GM18951 (cell line): ENCODE measurements at regions of chr1 and their contacts with region 1.

Region 1: DNA sequence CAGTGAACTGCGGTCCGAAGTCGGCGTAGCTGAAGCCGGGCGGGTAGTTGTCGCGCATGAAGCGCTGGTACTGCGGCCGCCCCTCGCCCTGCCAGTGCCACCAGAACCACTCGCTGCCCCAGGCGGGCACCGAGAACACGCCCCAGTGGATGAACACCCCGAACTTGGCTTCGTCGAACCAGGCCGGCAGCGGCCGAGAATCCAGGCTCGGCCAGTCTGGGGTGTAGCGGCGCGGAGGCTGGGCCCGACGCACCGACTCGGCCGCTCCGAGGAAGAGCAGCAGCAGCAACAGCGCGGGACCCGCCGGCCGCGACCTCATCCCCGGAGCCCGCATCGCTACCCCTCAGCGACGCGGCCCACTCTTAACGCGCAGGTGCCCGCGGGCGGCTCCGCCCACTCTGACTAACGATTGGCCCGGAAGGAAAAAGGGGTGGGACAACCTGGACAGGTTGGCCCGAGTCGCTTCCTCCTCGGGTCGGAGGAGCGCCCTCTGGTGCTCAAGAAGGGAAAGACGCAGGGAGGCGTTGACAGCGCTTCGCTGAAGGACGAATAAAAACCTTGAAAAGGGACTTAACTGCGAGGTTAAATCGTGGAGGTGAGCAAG is at the start of gene FUCA1:
- POLR2A ChIP-seq: peak; percentile 78

Region 2: DNA sequence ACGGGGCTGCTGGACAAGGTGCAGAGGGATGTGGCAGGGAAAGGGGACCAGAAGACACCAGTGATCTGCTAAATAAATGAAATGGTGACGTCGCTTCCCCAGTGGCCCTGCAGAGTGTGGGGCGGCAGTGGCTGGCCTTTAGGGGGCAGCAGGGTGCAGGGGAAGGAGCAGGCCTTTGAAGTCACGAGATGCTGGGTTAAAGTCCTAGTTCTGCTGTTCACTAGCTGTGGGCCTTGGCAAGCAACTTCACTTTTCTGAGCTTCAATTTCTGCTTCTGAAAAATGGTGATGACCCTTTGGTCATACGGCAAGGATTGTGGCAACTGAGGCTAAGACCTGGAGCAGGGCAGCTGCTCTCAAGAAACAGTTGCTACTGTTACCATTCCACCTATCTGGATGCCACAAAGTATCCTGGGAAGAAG is 58.3 kb before region 1 on chr1:
- in situ Hi-C with region 1: loop called (anchors 10 kb)
- POLR2A ChIP-seq: no peak

Region 3: GRCh38 chr1:23979878-23980724 is 112.0 kb after region 1 on chr1 and contains the start of gene SRSF10:
- in situ Hi-C with region 1: no loop called
- POLR2A ChIP-seq: peak; percentile 99